ENCODE measurements at regions of chr1 and their contacts with region 1.

Region 1: DNA sequence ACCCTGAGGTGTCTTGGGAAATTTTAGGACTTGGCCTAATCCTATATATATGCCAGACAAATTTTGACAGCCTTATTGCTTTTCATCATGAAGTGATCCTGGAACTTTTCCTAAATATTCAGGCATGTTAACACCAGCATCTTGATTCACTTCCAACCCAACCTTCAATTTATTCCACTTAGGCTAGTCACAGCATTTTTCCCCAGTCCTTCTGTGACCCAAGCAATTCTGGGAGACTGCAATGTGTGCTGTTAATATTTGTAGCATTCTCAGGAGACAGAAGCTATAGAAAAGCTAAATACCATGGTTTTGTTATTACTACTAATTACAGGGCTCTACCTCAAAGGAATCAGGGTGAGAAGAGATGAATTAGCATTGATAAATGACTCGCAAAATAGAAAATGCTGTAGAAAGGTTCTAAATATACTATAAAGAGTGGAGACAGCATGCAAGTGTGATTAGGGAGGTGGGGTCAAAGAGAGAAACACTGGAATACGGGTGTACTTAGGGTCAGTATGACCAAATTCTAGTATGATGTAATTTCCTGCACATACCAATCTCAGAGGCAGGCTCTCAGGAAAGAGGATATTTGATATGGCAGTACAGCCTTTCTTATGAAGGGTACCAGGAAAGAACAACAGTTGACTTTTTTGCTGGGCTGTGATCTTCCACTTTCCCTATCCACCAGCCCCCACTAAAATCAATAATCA is 29.1 kb downstream of the PRRX1 start:
- DNase-seq: no peak
- ATAC-seq: no peak
- H3K4me3 ChIP-seq: no peak overlapping the region
- H3K27ac ChIP-seq: no peak overlapping the region
- H3K4me1 ChIP-seq: no peaks in the 10 kb centered on the region
- CTCF ChIP-seq: no peak
- EP300 ChIP-seq: no peak
- POLR2A ChIP-seq: no peak
- RAD21 ChIP-seq: no peak

Region 2: DNA sequence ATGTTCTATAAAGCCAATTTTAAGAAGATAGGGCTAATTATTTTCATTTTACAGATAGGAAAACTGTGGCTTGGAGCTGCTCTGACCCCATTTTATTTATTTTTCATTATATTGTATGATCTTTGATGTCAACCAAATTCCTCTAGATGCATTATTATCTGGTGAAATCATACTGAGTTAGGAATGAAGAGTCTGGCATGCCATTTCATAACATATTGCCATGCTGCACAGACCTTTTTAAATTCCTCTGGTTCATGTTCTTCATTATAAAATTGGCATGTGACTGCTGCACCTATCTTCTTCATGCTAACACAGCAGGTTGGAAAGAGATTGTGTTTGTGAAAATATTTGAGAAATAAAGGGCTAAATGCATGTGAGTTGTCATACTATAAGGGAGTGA is 16.4 kb before region 1 on chr1:
- CTCF ChIA-PET with region 1: interaction called, 10 read pairs
- POLR2A ChIA-PET with region 1: no interaction called
- DNase-seq: no peak
- ATAC-seq: no peak
- H3K4me3 ChIP-seq: no peak overlapping the region
- H3K27ac ChIP-seq: no peak overlapping the region
- H3K4me1 ChIP-seq: no peaks in the 10 kb centered on the region
- CTCF ChIP-seq: no peak
- EP300 ChIP-seq: no peak
- POLR2A ChIP-seq: no peak
- RAD21 ChIP-seq: no peak

Region 3: DNA sequence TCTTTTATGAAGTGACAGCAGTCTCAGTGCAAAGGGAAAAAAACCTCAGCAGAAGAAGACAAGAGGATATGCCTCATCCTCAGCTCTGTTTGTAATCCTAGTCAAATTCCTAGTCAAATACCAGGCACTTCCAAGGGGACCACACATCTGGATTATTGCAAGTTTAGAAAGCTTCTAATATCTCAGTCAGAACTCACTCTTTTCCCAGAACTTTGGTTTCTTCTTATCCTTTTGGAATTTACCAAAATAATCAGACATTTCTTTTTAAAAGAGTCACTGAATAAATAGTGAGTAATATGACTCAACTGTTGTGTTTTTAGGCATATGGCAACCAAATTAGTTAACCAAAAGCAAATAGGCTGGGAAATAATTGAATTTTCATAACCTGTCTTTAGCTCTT is 18.7 kb after region 1 on chr1:
- CTCF ChIA-PET with region 1: interaction called, 19 read pairs
- POLR2A ChIA-PET with region 1: no interaction called
- DNase-seq: no peak
- ATAC-seq: no peak
- H3K4me3 ChIP-seq: no peak overlapping the region
- H3K27ac ChIP-seq: no peak overlapping the region
- H3K4me1 ChIP-seq: no peaks in the 10 kb centered on the region
- CTCF ChIP-seq: no peak
- EP300 ChIP-seq: no peak
- POLR2A ChIP-seq: no peak
- RAD21 ChIP-seq: no peak